Dendritic cell treated with granulocyte-macrophage colony-stimulating factor and Interleukin-4, amounts not matched to agents 40 ng/mL and 50 ng/mL, for 4 days (primary cell): ENCODE measurements at regions of chr5 and their contacts with region 1.

Region 1: GRCh38 chr5:163347671-163348070 is 89.7 kb upstream of the CCNG1 start:
- H3K4me3 Mint-ChIP-seq: no peak overlapping the region
- H3K27ac Mint-ChIP-seq: no peak overlapping the region
- H3K4me1 Mint-ChIP-seq: peaks cover 37% of the 10 kb centered on the region
- H3K27me3 Mint-ChIP-seq: peaks cover 2% of the 10 kb centered on the region

Region 2: DNA sequence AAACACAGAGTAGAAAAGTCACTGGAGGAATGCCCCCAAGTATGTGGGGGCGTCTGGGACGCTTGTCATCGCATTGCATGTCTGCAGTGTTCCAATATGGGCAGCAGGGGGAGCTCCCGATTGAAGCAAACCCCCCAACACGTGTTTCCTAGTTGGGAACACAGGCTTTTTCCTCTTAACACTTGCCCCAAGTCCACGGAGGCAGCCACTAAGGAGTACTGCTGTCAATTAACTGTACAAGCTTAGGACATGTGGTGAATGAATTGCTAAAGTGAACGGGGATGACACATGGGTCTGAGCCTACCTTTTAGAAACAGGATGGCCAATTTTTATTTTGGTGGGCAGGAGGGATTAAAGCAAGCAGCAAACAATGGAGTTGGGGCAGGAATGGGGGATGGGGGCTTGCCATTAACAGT is 1803.3 kb before region 1 on chr5:
- intact Hi-C with region 1: loop called (anchors 2 kb)
- H3K4me3 Mint-ChIP-seq: no peak overlapping the region
- H3K27ac Mint-ChIP-seq: no peak overlapping the region
- H3K4me1 Mint-ChIP-seq: peaks cover 26% of the 10 kb centered on the region
- H3K27me3 Mint-ChIP-seq: peaks cover 48% of the 10 kb centered on the region

Region 3: DNA sequence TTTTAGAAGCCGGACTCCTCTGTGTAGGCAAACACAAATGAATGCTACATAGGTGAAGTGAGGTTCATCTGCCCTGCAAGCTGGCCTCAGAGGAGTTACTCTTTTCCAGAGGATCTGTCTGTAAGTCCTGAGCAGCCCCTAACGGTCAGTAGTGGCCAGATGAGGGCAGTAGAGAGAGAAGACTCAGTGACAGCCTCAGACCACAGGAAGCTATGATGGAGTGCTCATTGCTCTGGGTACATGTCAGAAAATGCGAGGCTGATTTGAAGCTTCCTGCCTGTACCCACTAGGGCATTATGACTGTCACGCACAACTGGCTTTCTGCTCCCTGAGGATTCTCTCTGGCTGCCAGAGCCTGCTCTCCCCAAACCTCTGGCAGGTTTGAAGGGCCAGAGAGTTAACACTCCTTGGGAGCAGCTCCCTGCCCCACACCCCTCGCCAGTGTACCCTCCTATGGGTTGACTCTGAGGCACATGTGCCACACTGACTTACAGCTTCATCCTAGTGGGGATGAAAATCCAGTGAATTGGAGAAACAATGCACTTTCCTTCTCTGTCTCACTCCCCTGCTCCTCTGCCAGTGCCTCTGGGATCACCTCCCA is 1138.6 kb before region 1 on chr5:
- intact Hi-C with region 1: loop called (anchors 2 kb)
- H3K4me3 Mint-ChIP-seq: no peak overlapping the region
- H3K27ac Mint-ChIP-seq: no peak overlapping the region
- H3K4me1 Mint-ChIP-seq: no peaks in the 10 kb centered on the region
- H3K27me3 Mint-ChIP-seq: no peaks in the 10 kb centered on the region

Region 4: GRCh38 chr5:163104464-163104863 is 243.2 kb before region 1 on chr5:
- intact Hi-C with region 1: loop called (anchors 10 kb)
- H3K4me3 Mint-ChIP-seq: no peak overlapping the region
- H3K27ac Mint-ChIP-seq: no peak overlapping the region
- H3K4me1 Mint-ChIP-seq: no peaks in the 10 kb centered on the region
- H3K27me3 Mint-ChIP-seq: no peaks in the 10 kb centered on the region

Region 5: GRCh38 chr5:163306421-163306820 is 41.2 kb before region 1 on chr5:
- intact Hi-C with region 1: loop called (anchors 1 kb)
- H3K4me3 Mint-ChIP-seq: no peak overlapping the region
- H3K27ac Mint-ChIP-seq: no peak overlapping the region
- H3K4me1 Mint-ChIP-seq: peaks cover 17% of the 10 kb centered on the region
- H3K27me3 Mint-ChIP-seq: peaks cover 12% of the 10 kb centered on the region